ENCODE measurements at regions of chr5 and their contacts with region 1.

Region 1: GRCh38 chr5:157743163-157744050 is at the start of gene LSM11:
- DNase-seq: peak; percentile 79 to 86 (median 85)
- H3K4me3 ChIP-seq: peak within 1 kb of the TSS; percentile 67 to 92 (median 85)
- H3K27ac ChIP-seq: peak within 1 kb of the TSS in 1 of 2 experiments; percentile 31
- H3K4me1 ChIP-seq: peaks cover 4 to 16% (median 10%) of the 10 kb centered on the region in 4 experiments
- H3K27me3 ChIP-seq: no peaks in the 10 kb centered on the region

Region 2: DNA sequence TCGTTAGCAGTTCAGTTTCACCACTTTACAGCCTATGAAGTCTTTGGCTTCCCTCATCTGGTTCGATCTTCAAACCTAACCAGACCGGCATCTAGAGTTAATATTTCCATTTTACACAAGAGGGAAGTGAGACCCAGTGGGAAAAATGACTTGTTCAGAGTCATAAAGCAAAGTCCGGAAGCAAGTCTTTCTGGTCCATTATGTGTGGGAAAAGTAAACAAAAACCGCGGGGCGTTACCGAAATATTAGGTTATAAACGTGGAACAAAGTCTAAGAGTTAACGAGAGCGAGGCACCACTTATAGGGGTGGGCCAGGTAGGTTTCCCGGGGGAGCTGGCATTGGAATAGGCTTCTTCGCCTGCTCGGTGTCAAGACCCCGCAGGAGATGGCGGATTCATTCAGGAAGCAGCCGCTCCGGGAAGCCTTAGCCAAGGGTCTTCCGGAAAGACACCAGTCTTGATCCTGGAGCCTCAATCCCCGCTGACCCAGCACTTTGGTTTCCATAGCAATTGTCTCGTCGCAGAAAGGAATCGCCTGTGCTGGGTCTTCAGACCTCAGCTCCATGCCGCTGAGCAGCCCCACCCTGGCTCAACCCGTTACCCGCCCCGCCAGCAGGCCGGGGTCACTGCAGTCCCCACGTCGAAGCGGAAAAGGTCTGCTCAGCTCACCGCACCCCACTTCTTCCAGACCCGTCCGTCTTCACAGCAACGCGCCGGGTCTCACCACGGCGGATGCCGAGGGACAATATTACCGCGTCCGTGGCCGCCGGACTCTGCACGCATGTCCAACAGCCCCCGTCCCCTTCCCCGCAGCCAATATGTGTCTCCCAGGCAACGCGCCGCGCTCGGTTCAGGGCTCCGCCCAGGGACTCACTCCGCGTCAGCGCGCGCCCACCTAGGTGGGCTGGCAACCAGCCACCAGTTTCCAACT is 72.5 kb before region 1 on chr5 and contains the start of gene C5orf52:
- CTCF ChIA-PET with region 1: interaction called, 47 read pairs
- POLR2A ChIA-PET with region 1: interaction called, 4 read pairs
- DNase-seq: peak in 2 of 3 donors; percentile 29 to 45
- H3K4me3 ChIP-seq: peak within 1 kb of the TSS; percentile 13 to 80 (median 63)
- H3K27ac ChIP-seq: no peak within 1 kb of the TSS
- H3K4me1 ChIP-seq: peaks cover 4 to 15% (median 13%) of the 10 kb centered on the region in 4 experiments
- H3K27me3 ChIP-seq: peaks cover 0 to 41% (median 18%) of the 10 kb centered on the region in 5 experiments

Region 3: DNA sequence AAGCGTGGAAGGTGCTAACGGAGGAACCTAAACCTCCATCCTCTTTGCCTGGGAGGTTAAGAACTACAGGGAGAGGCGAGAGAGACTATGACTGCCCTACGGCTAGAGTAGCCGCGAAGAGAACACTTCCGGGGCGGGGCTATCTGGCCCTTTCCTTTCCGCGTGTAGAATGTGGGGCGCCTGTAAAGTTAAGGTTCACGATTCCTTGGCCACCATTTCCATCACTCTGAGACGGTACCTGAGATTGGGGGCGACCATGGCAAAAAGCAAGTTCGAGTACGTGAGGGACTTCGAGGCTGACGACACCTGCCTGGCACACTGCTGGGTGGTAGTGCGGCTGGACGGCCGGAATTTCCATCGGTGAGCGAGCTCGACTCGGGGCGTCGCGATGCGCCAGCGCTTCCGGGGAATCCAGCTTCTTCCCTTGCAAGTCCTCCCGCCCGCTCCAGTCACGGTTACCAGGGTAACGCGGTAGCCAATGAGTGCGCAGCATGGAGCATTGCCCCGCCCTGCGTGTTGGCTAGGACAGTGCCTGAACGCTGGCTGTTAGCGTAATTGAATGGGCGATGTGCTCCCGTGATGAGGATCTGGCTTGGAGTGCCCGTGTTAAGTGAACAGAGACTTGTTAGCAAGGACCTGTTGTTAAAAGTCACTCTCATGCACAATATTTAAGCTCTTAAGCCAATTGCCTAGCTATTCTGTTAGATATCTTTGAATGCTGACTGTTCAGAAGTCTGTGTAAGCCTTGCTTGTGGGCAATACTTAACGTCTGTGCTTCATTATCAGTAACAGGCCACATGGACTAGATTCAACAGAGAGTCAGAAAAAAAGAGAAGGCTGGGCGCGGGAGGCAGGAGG is 11.9 kb before region 1 on chr5 and contains the start of gene THG1L:
- CTCF ChIA-PET with region 1: interaction called, 32 read pairs
- POLR2A ChIA-PET with region 1: no interaction called
- DNase-seq: peak; percentile 93 to 97 (median 97)
- H3K4me3 ChIP-seq: peak within 1 kb of the TSS; percentile 79 to 99 (median 91)
- H3K27ac ChIP-seq: peak within 1 kb of the TSS; percentile 83 to 85
- H3K4me1 ChIP-seq: peaks cover 6 to 11% (median 9%) of the 10 kb centered on the region in 4 experiments
- H3K27me3 ChIP-seq: no peaks in the 10 kb centered on the region

Region 4: GRCh38 chr5:157756122-157756521 is 12.7 kb after region 1 on chr5:
- CTCF ChIA-PET with region 1: interaction called, 23 read pairs
- POLR2A ChIA-PET with region 1: no interaction called
- DNase-seq: no peak
- H3K4me3 ChIP-seq: no peak overlapping the region
- H3K27ac ChIP-seq: no peak overlapping the region
- H3K4me1 ChIP-seq: no peaks in the 10 kb centered on the region
- H3K27me3 ChIP-seq: no peaks in the 10 kb centered on the region

Region 5: DNA sequence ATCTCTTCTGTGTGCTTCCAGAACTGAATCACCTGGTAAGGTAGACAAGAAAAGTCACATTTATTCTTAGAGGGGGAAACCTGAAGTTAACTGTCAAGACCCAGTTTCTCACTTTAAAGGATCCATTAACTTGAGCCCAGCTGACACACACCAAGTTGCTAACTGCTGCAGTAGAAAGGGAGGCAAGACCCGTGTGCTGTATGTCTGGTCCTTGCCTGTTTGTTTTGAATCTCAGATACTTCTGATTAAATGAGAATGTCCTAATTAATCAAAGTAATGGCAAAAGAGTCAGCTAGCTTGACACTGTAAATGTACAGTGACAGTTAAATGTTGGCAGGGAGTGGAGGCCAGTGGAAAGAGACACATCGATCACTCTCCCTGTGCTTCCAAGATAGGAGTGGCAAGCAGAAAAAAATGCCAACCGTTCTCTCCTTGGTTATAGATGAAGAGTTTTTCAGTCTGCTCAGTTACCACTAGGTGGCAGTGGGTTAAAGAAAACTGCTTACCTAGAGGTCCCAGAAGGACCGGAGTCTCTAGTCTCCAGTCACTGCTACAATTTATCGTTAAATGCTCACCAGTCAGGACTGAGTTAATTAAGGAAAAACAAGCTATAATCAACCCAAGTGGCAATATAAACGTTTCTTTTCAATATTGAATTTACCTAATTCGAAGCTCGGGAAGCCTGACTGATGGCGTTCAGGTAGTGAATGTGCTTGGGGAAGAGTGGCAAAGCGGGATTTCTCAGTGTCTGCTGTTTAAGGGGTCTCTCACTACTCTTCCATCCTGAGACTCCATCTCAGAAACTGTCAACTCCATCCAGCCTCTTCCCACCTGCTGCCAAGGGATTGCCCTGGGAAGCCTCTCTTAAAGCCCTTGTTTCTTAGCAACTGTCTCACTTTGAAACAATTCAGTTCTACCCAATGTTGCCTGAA is 18.5 kb after region 1 on chr5:
- CTCF ChIA-PET with region 1: interaction called, 21 read pairs
- POLR2A ChIA-PET with region 1: no interaction called
- DNase-seq: peak; percentile 63 to 72 (median 69)
- H3K4me3 ChIP-seq: no peak overlapping the region
- H3K27ac ChIP-seq: no peak overlapping the region
- H3K4me1 ChIP-seq: peaks cover 0 to 3% (median 0%) of the 10 kb centered on the region in 4 experiments
- H3K27me3 ChIP-seq: no peaks in the 10 kb centered on the region

Region 6: DNA sequence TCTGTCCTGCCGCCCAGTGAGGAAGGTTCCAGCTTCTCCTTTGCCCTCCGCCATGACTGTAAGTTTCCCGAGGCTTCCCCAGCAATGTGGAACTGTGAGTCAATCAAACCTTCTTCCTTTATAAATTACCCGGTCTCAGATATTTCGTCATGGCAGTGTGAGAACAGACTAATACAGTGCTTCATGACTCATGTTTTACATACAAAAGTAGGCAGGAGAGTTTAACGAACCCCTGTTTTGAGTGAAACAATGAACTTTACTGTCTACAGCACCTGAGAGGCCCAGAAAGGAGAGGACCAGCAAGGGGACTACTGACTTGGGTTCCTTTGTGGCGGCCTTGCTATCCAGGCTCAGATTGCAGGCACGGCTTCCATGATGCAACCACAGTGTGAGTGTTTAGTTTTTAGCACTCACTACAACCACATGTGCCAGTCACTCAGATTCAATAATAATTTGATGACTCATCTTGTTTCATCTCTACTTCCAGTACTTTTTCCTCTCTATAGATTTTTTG is 254.6 kb after region 1 on chr5:
- CTCF ChIA-PET with region 1: no interaction called
- POLR2A ChIA-PET with region 1: no interaction called
- DNase-seq: peak in 2 of 3 donors; percentile 10 to 28
- H3K4me3 ChIP-seq: no peak overlapping the region
- H3K27ac ChIP-seq: no peak overlapping the region
- H3K4me1 ChIP-seq: peaks cover 0 to 2% (median 0%) of the 10 kb centered on the region in 4 experiments
- H3K27me3 ChIP-seq: no peaks in the 10 kb centered on the region

Measured in common myeloid progenitor, CD34-positive (primary cell).